Posterior cingulate gyrus (tissue), 11 donors: ENCODE measurements at regions of chr4 and their contacts with region 1.

Region 1: GRCh38 chr4:4995103-4995907 is 24.0 kb downstream of the CYTL1 start:
- DNase-seq: peak in 9 of 10 donors; percentile 42 to 93 (median 70)

Region 2: DNA sequence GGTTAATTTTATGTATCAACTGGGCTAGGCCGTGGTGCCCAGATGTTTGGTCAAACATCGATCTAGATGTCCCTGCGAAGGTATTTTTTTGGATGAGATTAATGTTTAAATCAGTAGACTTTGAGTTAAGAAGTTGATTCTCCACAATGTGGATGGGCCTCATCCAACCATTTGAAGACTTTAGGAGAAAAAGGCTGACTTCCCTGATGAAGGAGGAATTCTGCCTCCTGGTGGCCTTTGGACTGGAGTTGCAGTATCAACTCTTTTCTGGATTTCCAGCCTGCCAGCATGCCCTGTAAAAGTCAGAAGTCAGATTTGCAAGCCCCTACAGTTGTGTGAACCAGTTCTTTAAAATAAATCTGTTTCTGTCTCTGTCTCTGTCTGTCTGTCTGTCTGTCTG is 147.4 kb after region 1 on chr4:
- intact Hi-C with region 1: loop called (anchors 2 kb)
- DNase-seq: peak in 1 of 10 donors; percentile 28

Region 3: DNA sequence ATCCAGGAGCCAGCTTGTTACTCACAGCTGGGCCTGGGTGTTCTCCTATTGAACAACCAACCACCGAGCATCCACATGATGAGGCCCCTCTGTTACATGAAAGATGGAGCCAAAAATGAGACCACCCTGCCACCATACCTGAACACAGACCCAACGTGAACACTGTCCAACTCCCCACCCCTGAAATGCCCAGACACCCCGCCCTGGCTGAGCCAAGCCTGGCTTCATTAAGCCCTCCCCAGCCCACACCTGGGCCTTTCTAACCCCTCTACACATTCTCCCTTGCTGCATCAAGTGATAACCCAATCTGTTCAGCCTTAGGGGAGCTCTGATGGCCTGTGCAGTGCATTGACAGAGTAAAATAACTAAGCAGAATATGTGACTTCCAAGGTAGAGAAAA is 796.3 kb after region 1 on chr4:
- intact Hi-C with region 1: loop called (anchors 5 kb)
- DNase-seq: no peak

Region 4: DNA sequence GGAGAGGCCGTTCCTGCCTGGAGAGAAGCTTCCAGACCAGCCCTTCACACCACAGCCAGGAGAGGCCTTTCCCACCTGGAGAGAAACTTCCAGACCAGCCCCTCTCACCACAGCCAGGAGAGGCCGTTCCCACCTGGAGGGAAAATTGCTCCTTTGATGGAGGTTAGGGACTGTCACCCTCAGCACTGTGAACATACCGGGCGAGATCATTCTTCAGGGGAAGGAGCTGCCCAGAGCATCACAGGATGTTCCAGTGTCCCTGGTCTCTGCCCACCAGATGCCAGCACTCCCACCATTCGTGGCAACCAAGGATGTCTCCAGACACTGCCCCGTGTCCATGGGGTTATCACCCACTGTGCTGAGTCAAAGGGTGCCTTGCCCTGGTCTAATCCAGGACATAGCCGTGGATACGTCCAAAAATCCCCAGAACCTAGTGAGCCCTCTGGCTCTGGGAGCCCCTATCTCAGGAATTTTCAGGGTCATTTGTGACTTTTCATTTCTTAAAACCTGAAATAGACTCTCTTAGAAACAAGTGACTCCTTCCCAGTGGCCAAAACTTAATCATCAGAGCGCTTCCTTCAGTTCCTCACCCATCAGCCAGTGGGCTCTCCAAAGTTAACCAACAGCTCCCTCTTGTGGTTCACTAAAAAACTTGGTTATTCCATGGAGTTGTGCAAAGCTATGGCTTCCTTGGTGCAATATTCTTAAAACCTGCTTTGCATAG is 817.4 kb after region 1 on chr4:
- intact Hi-C with region 1: loop called (anchors 10 kb)
- DNase-seq: peak in 1 of 10 donors; percentile 17

Region 5: GRCh38 chr4:6198768-6199421 is 1203.6 kb after region 1 on chr4:
- intact Hi-C with region 1: no loop called
- DNase-seq: peak in 8 of 10 donors; percentile 50 to 92 (median 61)